Gastrocnemius medialis (tissue), 4 donors: ENCODE measurements at regions of chr1 and their contacts with region 1.

Region 1: DNA sequence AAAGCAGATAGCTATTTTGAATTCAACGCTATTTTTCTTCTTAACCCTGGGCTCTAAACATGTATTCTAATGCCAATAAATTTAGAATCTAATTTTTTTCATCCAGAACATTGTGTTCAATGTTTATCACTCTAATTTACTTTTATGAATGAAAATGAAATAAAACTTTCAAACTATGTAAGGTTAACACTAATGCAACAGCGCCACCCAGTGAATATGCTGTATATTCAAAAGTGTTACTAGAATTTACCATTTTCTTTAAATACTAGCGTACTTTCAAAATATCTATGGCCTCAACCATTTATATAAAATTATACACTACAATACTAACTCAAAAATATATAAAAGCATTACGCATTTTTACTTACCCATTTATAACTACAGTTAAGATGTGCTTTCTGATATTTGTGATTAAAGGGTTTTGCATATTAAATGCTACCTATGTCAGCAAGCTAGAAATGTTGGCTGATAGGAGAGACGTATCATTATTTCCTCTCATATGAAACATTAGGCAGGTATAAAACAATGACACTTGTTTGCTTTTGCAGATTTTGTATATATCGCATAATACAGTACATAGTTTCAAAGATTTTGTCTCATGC is 5.9 kb upstream of the NUF2 start:
- DNase-seq: no peak
- ATAC-seq: no peak
- H3K4me3 ChIP-seq: no peak overlapping the region
- H3K27ac ChIP-seq: no peak overlapping the region
- H3K4me1 ChIP-seq: peaks cover 7 to 8% of the 10 kb centered on the region in 2 donors
- H3K27me3 ChIP-seq: no peaks in the 10 kb centered on the region
- CTCF ChIP-seq: peak; percentile 28 to 67 (median 59)
- POLR2A ChIP-seq: no peak

Region 2: DNA sequence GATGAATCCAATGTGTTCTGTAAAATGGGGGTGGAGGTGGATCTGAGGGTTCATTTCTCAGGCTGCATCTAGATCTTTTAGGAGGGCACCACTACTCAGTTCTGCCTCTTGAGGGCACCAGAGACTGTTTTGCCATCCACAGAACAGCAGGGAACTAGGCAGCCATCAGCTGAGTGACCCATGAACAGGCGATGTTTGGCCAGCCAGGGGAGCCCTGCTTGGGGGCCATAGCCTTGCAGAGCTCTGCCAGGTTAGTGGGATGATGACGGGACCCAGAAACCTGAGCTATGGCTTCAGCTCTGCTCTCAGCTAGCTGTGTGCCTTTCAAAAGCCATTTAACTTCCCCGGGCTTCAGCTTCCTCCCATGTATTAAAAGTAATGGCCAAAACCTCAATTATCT is 1259.8 kb before region 1 on chr1:
- in situ Hi-C with region 1: no loop called
- intact Hi-C with region 1: loop called (anchors 10 kb)
- DNase-seq: peak; percentile 17 to 36
- ATAC-seq: peak; percentile 80 to 84
- H3K4me3 ChIP-seq: no peak overlapping the region
- H3K27ac ChIP-seq: no peak overlapping the region
- H3K4me1 ChIP-seq: no peaks in the 10 kb centered on the region
- H3K27me3 ChIP-seq: no peaks in the 10 kb centered on the region
- CTCF ChIP-seq: peak; percentile 65 to 90 (median 81)
- POLR2A ChIP-seq: no peak

Region 3: DNA sequence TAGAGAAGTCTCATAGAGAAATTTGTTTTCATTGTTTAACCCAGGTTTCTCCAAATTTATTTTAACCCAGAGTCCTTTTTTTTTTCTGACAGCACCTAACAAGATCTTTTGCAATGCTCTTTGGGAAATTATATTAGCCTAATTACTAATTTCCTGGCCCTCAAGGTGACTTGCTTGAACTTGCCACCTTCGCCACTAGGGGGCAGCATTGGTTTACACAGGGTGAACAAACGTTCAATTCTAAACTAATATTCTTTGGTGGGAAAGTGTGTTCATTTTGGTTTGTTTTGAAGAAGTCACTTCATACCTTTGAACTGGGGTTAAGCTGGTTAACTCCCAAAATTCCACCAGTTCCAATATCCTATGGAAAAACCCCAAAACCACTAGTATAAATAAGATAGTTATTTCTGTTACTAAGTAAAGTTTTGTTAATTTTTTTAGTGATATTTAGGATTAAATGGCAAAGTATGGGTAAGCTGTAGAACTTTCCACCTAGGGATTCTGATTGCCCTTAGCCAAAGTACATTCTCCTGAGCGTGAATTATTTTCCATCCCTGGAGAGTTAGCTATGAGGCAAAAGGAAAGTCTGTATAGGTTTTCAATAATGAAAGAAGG is 467.9 kb before region 1 on chr1:
- in situ Hi-C with region 1: loop called (anchors 5 to 25 kb)
- intact Hi-C with region 1: no loop called
- DNase-seq: peak; percentile 24 to 43
- ATAC-seq: peak in 1 of 2 donors; percentile 36
- H3K4me3 ChIP-seq: no peak overlapping the region
- H3K27ac ChIP-seq: no peak overlapping the region
- H3K4me1 ChIP-seq: no peaks in the 10 kb centered on the region
- H3K27me3 ChIP-seq: no peaks in the 10 kb centered on the region
- CTCF ChIP-seq: peak; percentile 68 to 97 (median 74)
- POLR2A ChIP-seq: no peak

Region 4: GRCh38 chr1:162854245-162854882 is 461.5 kb before region 1 on chr1:
- in situ Hi-C with region 1: loop called (anchors 5 to 25 kb)
- intact Hi-C with region 1: loop called (anchors 2 kb)
- DNase-seq: peak; percentile 11 to 14
- ATAC-seq: no peak
- H3K4me3 ChIP-seq: no peak overlapping the region
- H3K27ac ChIP-seq: no peak overlapping the region
- H3K4me1 ChIP-seq: no peaks in the 10 kb centered on the region
- H3K27me3 ChIP-seq: no peaks in the 10 kb centered on the region
- CTCF ChIP-seq: peak in 3 of 5 experiments; percentile 36 to 66 (median 56)
- POLR2A ChIP-seq: no peak

Region 5: DNA sequence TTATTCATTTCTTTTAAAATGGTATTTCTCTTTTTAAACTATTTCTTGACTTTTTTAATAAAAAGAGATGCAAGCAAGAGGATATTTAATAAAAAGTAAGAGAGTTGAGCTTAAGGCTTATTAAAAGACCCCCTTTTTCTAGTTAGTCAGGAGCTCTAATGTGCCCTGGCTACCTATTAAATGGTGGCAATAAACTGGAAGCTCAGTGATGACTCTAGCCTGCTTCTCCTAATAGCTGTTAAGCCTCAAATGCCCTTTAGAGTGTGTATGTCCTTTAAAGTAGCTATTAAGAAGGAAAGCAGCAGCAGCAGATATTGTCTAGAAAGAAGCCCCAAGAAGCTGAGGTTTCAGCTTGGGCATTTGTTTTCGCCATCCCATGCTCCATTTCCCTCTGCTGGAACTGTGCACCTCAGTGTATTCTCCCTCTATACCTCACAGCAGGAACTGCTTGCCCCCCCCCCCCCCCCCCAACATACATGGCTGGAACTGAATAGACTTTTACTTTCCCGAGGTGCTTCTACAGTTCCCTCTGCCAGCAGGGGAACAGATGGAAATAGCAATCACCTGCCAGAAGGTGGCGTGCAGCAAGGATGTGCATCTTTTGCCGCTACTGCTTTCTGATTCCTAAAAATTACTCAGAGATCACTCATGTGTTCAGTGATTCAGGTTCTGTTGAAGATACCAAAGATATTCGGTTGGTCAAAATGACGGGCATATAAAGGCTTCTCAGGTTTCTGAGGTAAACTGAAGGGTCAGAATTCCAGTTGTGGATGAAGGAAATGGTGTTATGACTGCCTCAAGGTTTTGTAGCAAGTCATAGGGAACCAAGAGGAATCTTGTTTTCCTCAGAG is 244.2 kb before region 1 on chr1:
- in situ Hi-C with region 1: no loop called
- intact Hi-C with region 1: loop called (anchors 5 kb)
- DNase-seq: peak in 1 of 2 donors; percentile 6
- ATAC-seq: peak in 1 of 2 donors; percentile 39
- H3K4me3 ChIP-seq: no peak overlapping the region
- H3K27ac ChIP-seq: no peak overlapping the region
- H3K4me1 ChIP-seq: no peaks in the 10 kb centered on the region
- H3K27me3 ChIP-seq: peaks cover 0 to 4% (median 0%) of the 10 kb centered on the region in 3 donors
- CTCF ChIP-seq: peak in 3 of 5 experiments; percentile 28 to 63 (median 54)
- POLR2A ChIP-seq: no peak